ENCODE measurements at regions of chr5 and their contacts with region 1.

Region 1: GRCh38 chr5:177509381-177509951 is at the start of gene DOK3:
- DNase-seq: no peak
- H3K4me3 ChIP-seq: no peak within 1 kb of the TSS
- H3K27ac ChIP-seq: no peak within 1 kb of the TSS
- H3K4me1 ChIP-seq: peaks cover 0 to 12% (median 9%) of the 10 kb centered on the region in 4 experiments; a peak in 5 of 7 replicates
- H3K27me3 ChIP-seq: no peaks in the 10 kb centered on the region
- CTCF ChIP-seq: no peak
- EP300 ChIP-seq: no peak
- POLR2A ChIP-seq: no peak
- RAD21 ChIP-seq: no peak
- total RNA-seq, gene DOK3: 6.4 and 8.6 TPM in 2 replicates

Region 2: DNA sequence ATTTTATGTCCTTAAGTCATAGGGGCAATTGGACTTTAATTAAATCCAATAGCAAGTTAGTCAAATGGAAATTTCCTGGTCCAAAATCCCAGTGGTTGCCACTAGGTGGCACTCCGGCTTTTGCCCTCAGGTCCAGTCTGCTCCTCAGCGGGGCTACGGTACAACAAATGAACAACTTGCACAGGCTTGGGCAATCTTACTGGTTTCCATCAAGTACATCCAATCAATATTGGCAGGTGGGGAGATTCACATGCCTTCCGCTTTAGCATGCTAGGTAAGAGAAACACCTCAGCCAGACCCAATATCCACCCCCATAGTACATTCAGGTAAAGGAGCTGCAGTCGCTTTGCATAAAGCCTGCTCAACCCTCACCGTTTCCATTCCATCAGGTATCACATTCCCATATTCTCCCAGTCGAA is 191.5 kb before region 1 on chr5:
- CTCF ChIA-PET with region 1: no interaction called
- POLR2A ChIA-PET with region 1: no interaction called
- DNase-seq: peak in 1 of 2 experiments; percentile 87
- H3K4me3 ChIP-seq: no peak overlapping the region
- H3K27ac ChIP-seq: no peak overlapping the region
- H3K4me1 ChIP-seq: peaks cover 0 to 4% (median 1%) of the 10 kb centered on the region in 4 experiments; a peak in 4 of 7 replicates
- H3K27me3 ChIP-seq: no peaks in the 10 kb centered on the region
- CTCF ChIP-seq: peak in 2 of 3 experiments; percentile 85 to 89; a peak in 3 of 4 replicates
- EP300 ChIP-seq: no peak
- POLR2A ChIP-seq: no peak
- RAD21 ChIP-seq: peak; percentile 87 to 90

Region 3: GRCh38 chr5:177351385-177352329 is 157.8 kb before region 1 on chr5 and contains the start of gene LMAN2:
- CTCF ChIA-PET with region 1: no interaction called
- POLR2A ChIA-PET with region 1: no interaction called
- DNase-seq: peak; percentile 80 to 90
- H3K4me3 ChIP-seq: peak within 1 kb of the TSS; percentile 80 to 100 (median 94)
- H3K27ac ChIP-seq: peak within 1 kb of the TSS; percentile 94
- H3K4me1 ChIP-seq: peaks cover 0 to 13% (median 4%) of the 10 kb centered on the region in 4 experiments; a peak in 3 of 7 replicates
- H3K27me3 ChIP-seq: 0 out of 7 replicates have a peak, but pooled peaks cover 0 to 5% (median 0%) of the 10 kb centered on the region in 4 experiments
- CTCF ChIP-seq: no peak
- EP300 ChIP-seq: no peak
- POLR2A ChIP-seq: peak in 1 of 2 experiments; percentile 83; a peak in 2 of 3 replicates
- RAD21 ChIP-seq: no peak
- total RNA-seq, gene LMAN2: 116 and 119 TPM in 2 replicates

Region 4: GRCh38 chr5:177554474-177555111 is 45.1 kb after region 1 on chr5 and contains the start of gene FAM193B:
- CTCF ChIA-PET with region 1: no interaction called
- POLR2A ChIA-PET with region 1: interaction called, 10 read pairs
- DNase-seq: peak; percentile 77 to 99
- H3K4me3 ChIP-seq: peak within 1 kb of the TSS; percentile 68 to 86 (median 82)
- H3K27ac ChIP-seq: peak within 1 kb of the TSS; percentile 29; the same call in 1 of the 2 replicates
- H3K4me1 ChIP-seq: peaks cover 5 to 9% (median 7%) of the 10 kb centered on the region in 4 experiments
- H3K27me3 ChIP-seq: no peaks in the 10 kb centered on the region
- CTCF ChIP-seq: peak; percentile 13 to 49 (median 38); a peak in 2 of 4 replicates
- EP300 ChIP-seq: no peak
- POLR2A ChIP-seq: peak in 1 of 2 experiments; percentile 29; a peak in 1 of 3 replicates
- RAD21 ChIP-seq: no peak
- total RNA-seq, gene FAM193B: 69.8 and 75.2 TPM in 2 replicates

Region 5: GRCh38 chr5:178416919-178417318 is 907.5 kb after region 1 on chr5:
- CTCF ChIA-PET with region 1: no interaction called
- POLR2A ChIA-PET with region 1: no interaction called
- DNase-seq: no peak
- H3K4me3 ChIP-seq: no peak overlapping the region
- H3K27ac ChIP-seq: no peak overlapping the region
- H3K4me1 ChIP-seq: peaks cover 11 to 33% (median 19%) of the 10 kb centered on the region in 4 experiments
- H3K27me3 ChIP-seq: no peaks in the 10 kb centered on the region
- CTCF ChIP-seq: no peak
- EP300 ChIP-seq: no peak
- POLR2A ChIP-seq: no peak
- RAD21 ChIP-seq: no peak

Measured in H1 (cell line).